Caco-2 (cell line): ENCODE measurements at regions of chr6 and their contacts with region 1.

Region 1: DNA sequence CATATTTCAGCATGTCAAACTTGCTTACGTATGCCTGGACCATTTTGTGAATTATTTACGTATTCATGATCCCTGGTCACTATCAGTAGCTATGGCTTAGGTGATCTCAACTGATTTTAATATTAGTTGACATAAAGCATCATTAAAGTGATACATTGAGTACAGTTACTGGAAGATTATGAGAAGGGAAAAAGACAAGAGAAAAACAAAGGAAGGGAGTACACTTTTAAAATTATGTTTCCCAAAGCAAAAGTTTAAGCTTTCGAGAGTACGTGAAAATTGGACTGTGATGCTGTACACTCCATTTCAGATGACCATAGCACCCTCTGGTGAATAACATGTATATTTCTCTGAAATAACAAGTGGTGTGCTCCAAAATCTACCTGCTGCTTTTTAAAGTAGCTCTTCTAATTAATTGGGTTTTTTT is 215.0 kb upstream of the HSF2 start:
- DNase-seq: peak in 1 of 2 experiments; percentile 6
- H3K4me3 ChIP-seq: no peak overlapping the region
- H3K4me3 Mint-ChIP-seq: no peak overlapping the region
- H3K27ac Mint-ChIP-seq: no peak overlapping the region
- H3K4me1 ChIP-seq: no peaks in the 10 kb centered on the region
- H3K4me1 Mint-ChIP-seq: no peaks in the 10 kb centered on the region
- H3K27me3 ChIP-seq: no peaks in the 10 kb centered on the region
- H3K27me3 Mint-ChIP-seq: peaks cover 7% of the 10 kb centered on the region
- CTCF ChIP-seq: peak in 1 of 2 experiments; percentile 26

Region 2: DNA sequence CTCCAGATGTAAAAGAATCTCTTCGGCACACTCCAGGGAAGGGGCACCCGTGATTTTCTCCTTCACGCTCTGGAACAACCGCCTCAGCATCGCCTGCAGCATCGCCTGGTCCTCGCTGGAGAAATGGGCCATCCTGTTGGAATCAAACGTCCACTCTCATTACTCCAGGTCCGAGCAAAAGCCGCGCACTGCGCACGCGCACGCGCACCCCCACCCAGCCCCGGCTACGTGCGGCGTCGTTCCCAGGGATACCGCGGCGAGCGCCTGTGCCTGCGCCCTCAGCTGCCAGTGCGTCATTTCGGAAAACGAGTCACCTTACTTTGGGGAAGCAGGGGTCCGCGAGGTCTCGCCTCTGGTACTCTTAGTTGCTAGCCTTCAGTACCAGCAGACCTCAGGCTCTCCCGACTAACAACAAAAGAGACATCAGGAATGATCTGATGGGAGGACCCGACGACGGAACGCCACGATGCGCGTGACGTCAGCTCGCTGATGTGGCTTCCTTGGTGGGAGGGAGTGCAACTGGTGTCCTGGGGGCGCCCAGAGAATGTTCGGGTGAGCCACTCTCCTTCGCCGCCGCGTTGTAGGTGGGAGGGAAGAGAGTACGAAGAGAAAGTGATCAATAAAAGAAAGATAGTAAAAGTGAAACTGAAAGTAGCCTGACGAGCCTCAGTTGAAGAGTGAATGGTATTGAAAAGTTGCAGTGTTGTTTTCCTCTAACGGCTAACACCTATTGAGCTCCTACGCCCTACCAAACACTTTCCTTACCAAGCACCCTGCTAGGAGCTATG is 849.9 kb before region 1 on chr6 and contains the start of gene TBC1D32:
- CTCF ChIA-PET with region 1: no interaction called
- POLR2A ChIA-PET with region 1: no interaction called
- intact Hi-C with region 1: loop called (anchors 10 kb)
- DNase-seq: peak; percentile 89 to 94
- H3K4me3 ChIP-seq: peak within 1 kb of the TSS; percentile 48
- H3K4me3 Mint-ChIP-seq: peak within 1 kb of the TSS; percentile 81
- H3K27ac Mint-ChIP-seq: peak within 1 kb of the TSS; percentile 87
- H3K4me1 ChIP-seq: peaks cover 9% of the 10 kb centered on the region; the same call in 1 of the 2 replicates
- H3K4me1 Mint-ChIP-seq: no peaks in the 10 kb centered on the region
- H3K27me3 ChIP-seq: no peaks in the 10 kb centered on the region
- H3K27me3 Mint-ChIP-seq: no peaks in the 10 kb centered on the region
- CTCF ChIP-seq: no peak
- total RNA-seq, gene TBC1D32: 3.4 and 5.6 TPM in 2 replicates

Region 3: GRCh38 chr6:122049341-122049740 is 135.1 kb before region 1 on chr6:
- CTCF ChIA-PET with region 1: no interaction called
- POLR2A ChIA-PET with region 1: interaction called, 14 read pairs
- intact Hi-C with region 1: loop called (anchors 10 kb)
- DNase-seq: no peak
- H3K4me3 ChIP-seq: no peak overlapping the region
- H3K4me3 Mint-ChIP-seq: no peak overlapping the region
- H3K27ac Mint-ChIP-seq: no peak overlapping the region
- H3K4me1 ChIP-seq: no peaks in the 10 kb centered on the region
- H3K4me1 Mint-ChIP-seq: no peaks in the 10 kb centered on the region
- H3K27me3 ChIP-seq: no peaks in the 10 kb centered on the region
- H3K27me3 Mint-ChIP-seq: peaks cover 14% of the 10 kb centered on the region
- CTCF ChIP-seq: no peak